Posterior vena cava (tissue), 2 donors: ENCODE measurements at regions of chr6 and their contacts with region 1.

Region 1: GRCh38 chr6:92024110-92024509 is 1395.2 kb downstream of the EPHA7 start:
- DNase-seq: no peak

Region 2: DNA sequence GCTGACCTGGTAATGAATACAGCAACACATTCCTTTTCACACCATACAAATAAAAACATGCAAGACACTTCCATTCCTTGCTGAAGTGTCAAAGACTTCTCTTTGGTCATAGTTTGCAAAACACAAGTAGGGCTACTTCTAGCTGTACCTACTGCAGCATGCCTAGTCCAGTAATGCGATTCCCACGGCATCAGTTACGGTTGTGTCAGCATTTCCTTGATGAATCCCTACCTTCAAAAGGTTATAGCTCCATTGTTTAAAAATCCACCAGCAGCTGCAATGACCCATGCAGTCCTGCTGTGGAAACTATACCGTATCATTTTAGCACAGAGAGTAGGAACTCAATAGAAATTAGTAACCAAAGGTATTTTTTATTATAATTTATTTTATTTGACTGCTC is 23.8 kb after region 1 on chr6:
- intact Hi-C with region 1: loop called in 1 of 2 experiments (anchors 2 kb)
- DNase-seq: no peak